ENCODE measurements at regions of chr10 and their contacts with region 1.

Region 1: GRCh38 chr10:69408318-69409175 is 8.2 kb downstream of the TACR2 start:
- DNase-seq: peak; percentile 88
- ATAC-seq: peak; percentile 87
- H3K4me3 ChIP-seq: no peak overlapping the region
- H3K27ac ChIP-seq: peak overlapping the region; percentile 34; the same call in 1 of the 2 replicates
- H3K4me1 ChIP-seq: peaks cover 9 to 21% of the 10 kb centered on the region in 2 experiments
- H3K27me3 ChIP-seq: no peaks in the 10 kb centered on the region
- CTCF ChIP-seq: peak; percentile 30 to 59 (median 55); a peak in 5 of 6 replicates
- POLR2A ChIP-seq: peak; percentile 43
- RAD21 ChIP-seq: peak; percentile 48

Region 2: GRCh38 chr10:69392481-69393000 is 16.0 kb before region 1 on chr10:
- CTCF ChIA-PET with region 1: interaction called, 17 read pairs
- POLR2A ChIA-PET with region 1: no interaction called
- RAD21 ChIA-PET with region 1: no interaction called
- intact Hi-C with region 1: no loop called
- DNase-seq: peak; percentile 65
- ATAC-seq: peak; percentile 97
- H3K4me3 ChIP-seq: no peak overlapping the region
- H3K27ac ChIP-seq: no peak overlapping the region
- H3K4me1 ChIP-seq: peaks cover 0 to 7% of the 10 kb centered on the region in 2 experiments; a peak in 1 of 4 replicates
- H3K27me3 ChIP-seq: no peaks in the 10 kb centered on the region
- CTCF ChIP-seq: peak; percentile 84 to 98 (median 95)
- POLR2A ChIP-seq: no peak
- RAD21 ChIP-seq: peak; percentile 99

Region 3: DNA sequence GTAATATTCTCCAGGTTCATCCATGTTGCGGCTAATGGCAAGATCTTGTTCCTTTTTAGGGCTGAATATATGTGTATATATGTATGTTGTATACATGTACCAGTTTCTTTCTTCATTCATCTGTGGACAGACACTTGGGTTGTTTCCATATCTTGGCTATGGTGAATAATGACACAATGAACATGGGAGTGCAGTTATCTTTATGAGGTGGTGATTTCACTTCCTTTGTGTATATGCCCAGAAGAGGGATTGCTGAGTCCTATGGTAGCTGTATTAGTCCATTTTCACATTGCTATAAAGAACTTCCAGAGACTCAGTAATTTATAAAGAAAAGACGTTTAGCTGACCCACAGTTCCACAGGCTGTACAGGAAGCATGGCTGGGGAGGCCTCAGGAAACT is 25.6 kb after region 1 on chr10:
- CTCF ChIA-PET with region 1: interaction called, 10 read pairs
- POLR2A ChIA-PET with region 1: no interaction called
- RAD21 ChIA-PET with region 1: no interaction called
- intact Hi-C with region 1: no loop called
- DNase-seq: no peak
- ATAC-seq: no peak
- H3K4me3 ChIP-seq: no peak overlapping the region
- H3K27ac ChIP-seq: no peak overlapping the region
- H3K4me1 ChIP-seq: peaks cover 13 to 17% of the 10 kb centered on the region in 2 experiments
- H3K27me3 ChIP-seq: no peaks in the 10 kb centered on the region
- CTCF ChIP-seq: no peak
- POLR2A ChIP-seq: no peak
- RAD21 ChIP-seq: no peak

Region 4: DNA sequence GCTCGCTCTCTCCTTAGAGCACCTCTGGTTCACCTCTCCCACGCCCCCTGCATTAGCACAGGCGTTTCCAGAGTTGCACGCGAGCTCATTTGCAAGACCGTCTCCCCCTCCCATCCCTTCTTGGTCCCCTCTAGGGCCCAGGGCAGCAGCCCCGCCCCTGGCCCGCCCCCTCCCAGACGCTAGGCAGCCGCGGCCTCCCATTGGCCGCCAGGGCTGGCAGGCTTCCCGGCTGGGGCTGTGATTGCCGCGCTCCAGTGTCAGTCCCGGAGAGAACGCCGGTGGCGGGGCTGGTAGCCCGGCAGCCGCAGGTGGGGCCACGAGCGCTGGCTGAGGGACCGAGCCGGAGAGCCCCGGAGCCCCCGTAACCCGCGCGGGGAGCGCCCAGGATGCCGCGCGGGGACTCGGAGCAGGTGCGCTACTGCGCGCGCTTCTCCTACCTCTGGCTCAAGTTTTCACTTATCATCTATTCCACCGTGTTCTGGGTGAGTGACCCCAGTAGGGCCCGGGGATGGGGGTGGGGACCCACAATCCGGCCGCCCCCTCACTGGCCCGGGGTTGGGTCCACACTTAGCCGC is 42.7 kb after region 1 on chr10 and contains the start of gene TSPAN15:
- CTCF ChIA-PET with region 1: interaction called, 14 read pairs
- POLR2A ChIA-PET with region 1: no interaction called
- RAD21 ChIA-PET with region 1: no interaction called
- intact Hi-C with region 1: no loop called
- DNase-seq: peak; percentile 75
- ATAC-seq: peak; percentile 84
- H3K4me3 ChIP-seq: peak within 1 kb of the TSS; percentile 73 to 82
- H3K27ac ChIP-seq: peak within 1 kb of the TSS; percentile 58
- H3K4me1 ChIP-seq: peaks cover 35 to 64% of the 10 kb centered on the region in 2 experiments
- H3K27me3 ChIP-seq: no peaks in the 10 kb centered on the region
- CTCF ChIP-seq: no peak
- POLR2A ChIP-seq: no peak
- RAD21 ChIP-seq: no peak
- total RNA-seq, gene TSPAN15: 16.0 TPM

Region 5: DNA sequence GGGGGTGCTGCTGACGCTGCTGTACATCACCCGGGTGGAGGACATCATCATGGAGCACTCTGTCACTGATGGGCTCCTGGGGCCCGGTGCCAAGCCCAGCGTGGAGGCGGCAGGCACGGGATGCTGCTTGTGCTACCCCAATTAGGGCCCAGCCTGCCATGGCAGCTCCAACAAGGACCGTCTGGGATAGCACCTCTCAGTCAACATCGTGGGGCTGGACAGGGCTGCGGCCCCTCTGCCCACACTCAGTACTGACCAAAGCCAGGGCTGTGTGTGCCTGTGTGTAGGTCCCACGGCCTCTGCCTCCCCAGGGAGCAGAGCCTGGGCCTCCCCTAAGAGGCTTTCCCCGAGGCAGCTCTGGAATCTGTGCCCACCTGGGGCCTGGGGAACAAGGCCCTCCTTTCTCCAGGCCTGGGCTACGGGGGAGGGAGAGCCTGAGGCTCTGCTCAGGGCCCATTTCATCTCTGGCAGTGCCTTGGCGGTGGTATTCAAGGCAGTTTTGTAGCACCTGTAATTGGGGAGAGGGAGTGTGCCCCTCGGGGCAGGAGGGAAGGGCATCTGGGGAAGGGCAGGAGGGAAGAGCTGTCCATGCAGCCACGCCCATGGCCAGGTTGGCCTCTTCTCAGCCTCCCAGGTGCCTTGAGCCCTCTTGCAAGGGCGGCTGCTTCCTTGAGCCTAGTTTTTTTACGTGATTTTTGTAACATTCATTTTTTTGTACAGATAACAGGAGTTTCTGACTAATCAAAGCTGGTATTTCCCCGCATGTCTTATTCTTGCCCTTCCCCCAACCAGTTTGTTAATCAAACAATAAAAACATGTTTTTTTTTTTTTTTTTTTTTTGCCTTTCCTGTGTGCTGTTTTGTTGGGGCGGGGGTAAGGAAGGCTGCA is 98.5 kb after region 1 on chr10:
- CTCF ChIA-PET with region 1: interaction called, 46 read pairs
- POLR2A ChIA-PET with region 1: interaction called, 3 read pairs
- RAD21 ChIA-PET with region 1: no interaction called
- intact Hi-C with region 1: loop called (anchors 1 kb)
- DNase-seq: no peak
- ATAC-seq: no peak
- H3K4me3 ChIP-seq: peak overlapping the region in 1 of 2 experiments; percentile 21; a peak in 3 of 4 replicates
- H3K27ac ChIP-seq: peak overlapping the region; percentile 41; the same call in 1 of the 2 replicates
- H3K4me1 ChIP-seq: peaks cover 7 to 13% of the 10 kb centered on the region in 2 experiments; a peak in 3 of 4 replicates
- H3K27me3 ChIP-seq: no peaks in the 10 kb centered on the region
- CTCF ChIP-seq: no peak
- POLR2A ChIP-seq: no peak
- RAD21 ChIP-seq: no peak

Region 6: DNA sequence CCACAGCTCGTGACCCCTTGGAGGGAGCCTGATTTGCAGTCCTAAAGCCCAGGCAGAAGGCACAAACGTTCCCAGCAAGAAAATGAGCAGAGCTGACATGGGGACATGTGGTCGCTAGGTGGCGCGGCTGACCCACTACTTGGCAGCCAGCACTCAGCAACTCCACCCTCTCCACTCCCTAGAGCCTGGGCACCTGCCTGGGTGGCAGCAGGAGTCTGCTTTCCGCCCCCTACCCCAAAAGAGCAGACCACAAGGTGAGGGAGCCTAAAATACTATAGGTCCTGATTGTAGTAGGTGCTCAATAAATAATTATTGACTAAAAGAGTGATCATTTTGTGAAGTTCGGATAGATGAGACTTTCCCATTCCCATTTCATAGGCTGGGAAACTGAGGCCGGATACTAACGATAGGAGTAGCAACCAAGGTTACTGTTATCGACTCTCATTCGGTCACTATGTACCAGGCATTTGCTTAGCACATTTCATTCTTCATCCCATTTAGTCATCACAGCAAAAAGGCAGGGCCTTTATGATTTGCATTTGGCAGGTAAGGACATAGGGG is 107.2 kb after region 1 on chr10:
- CTCF ChIA-PET with region 1: interaction called, 16 read pairs
- POLR2A ChIA-PET with region 1: no interaction called
- RAD21 ChIA-PET with region 1: no interaction called
- intact Hi-C with region 1: no loop called
- DNase-seq: peak; percentile 47
- ATAC-seq: peak; percentile 96
- H3K4me3 ChIP-seq: no peak overlapping the region
- H3K27ac ChIP-seq: no peak overlapping the region
- H3K4me1 ChIP-seq: no peaks in the 10 kb centered on the region
- H3K27me3 ChIP-seq: no peaks in the 10 kb centered on the region
- CTCF ChIP-seq: peak; percentile 89 to 94 (median 89)
- POLR2A ChIP-seq: no peak
- RAD21 ChIP-seq: peak; percentile 93

Measured in HCT116 (cell line).